Upper lobe of right lung (tissue), 1 donor: ENCODE measurements at regions of chr16 and their contacts with region 1.

Region 1: DNA sequence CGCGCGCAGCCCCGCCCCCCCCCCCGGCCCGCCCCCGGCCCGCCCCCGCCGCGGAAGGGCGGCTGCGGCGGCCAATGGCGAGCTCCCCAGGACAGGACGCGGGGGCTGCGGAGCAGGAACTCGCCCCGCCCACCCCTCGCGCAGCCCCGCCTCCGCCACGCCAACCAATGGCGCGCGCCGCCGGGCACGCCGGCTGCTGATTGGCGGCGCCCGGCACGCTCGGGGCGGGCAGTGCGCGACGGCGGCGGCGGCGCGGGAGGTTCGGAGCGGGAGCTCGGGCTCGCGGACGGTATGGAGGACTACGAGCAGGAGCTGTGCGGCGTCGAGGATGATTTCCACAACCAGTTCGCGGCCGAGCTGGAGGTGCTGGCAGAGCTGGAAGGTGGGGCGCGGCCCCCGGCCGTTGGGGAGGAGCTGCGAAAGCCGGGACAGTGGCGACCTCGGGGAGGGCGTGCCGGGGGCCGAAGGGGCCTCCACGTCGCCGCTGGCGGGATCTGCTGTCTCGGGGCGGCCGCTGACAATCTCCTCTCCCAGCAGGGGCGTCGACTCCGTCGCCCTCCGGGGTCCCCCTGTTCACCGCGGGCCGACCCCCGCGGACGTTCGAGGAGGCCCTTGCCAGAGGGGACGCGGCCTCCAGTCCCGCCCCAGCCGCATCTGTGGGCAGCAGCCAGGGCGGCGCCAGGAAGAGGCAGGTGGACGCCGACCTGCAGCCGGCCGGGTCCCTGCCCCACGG is at the start of gene CHTF18:
- DNase-seq: peak; percentile 96
- ATAC-seq: peak; percentile 93
- H3K4me3 ChIP-seq: peak within 1 kb of the TSS; percentile 81
- H3K27ac ChIP-seq: peak within 1 kb of the TSS; percentile 77
- H3K4me1 ChIP-seq: peaks cover 10% of the 10 kb centered on the region
- H3K27me3 ChIP-seq: peaks cover 2% of the 10 kb centered on the region
- CTCF ChIP-seq: no peak
- total RNA-seq, gene CHTF18: 12.3 TPM

Region 2: GRCh38 chr16:714558-715476 is 73.7 kb before region 1 on chr16 and contains the start of gene METRN:
- intact Hi-C with region 1: loop called (anchors 10 kb)
- DNase-seq: peak; percentile 96
- ATAC-seq: peak; percentile 90
- H3K4me3 ChIP-seq: peak within 1 kb of the TSS; percentile 70
- H3K27ac ChIP-seq: peak within 1 kb of the TSS; percentile 36
- H3K4me1 ChIP-seq: peaks cover 16% of the 10 kb centered on the region
- H3K27me3 ChIP-seq: peaks cover 18% of the 10 kb centered on the region
- CTCF ChIP-seq: no peak
- total RNA-seq, gene METRN: 30.4 TPM

Region 3: GRCh38 chr16:728131-728889 is 60.2 kb before region 1 on chr16:
- intact Hi-C with region 1: no loop called
- DNase-seq: peak; percentile 88
- ATAC-seq: peak; percentile 69
- H3K4me3 ChIP-seq: peak overlapping the region; percentile 58
- H3K27ac ChIP-seq: no peak overlapping the region
- H3K4me1 ChIP-seq: peaks cover 20% of the 10 kb centered on the region
- H3K27me3 ChIP-seq: peaks cover 16% of the 10 kb centered on the region
- CTCF ChIP-seq: no peak